IMR-90 (cell line): ENCODE measurements at regions of chr10 and their contacts with region 1.

Region 1: DNA sequence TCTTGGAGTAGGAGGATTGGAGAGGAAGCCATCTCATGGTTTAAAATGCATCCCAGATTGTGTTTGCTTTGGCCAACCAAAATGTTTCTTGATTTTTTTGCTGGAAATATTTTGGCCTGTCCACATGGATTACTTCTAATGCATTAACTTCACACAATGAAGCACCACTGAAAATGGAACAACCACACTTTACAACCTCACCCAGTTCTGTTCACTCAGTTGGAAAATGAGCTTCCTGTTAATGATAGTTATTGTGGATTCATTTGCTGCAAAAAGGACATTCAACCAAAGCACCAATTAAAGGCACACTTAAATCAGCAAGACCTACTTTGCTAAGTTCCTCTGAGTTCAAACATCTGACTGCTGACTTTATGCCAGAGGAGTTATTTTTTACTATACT is 11.3 kb upstream of the A1CF start:
- DNase-seq: no peak
- ATAC-seq: no peak
- H3K4me3 ChIP-seq: no peak overlapping the region
- H3K27ac ChIP-seq: no peak overlapping the region
- H3K4me1 ChIP-seq: no peaks in the 10 kb centered on the region
- H3K27me3 ChIP-seq: peaks cover 6% of the 10 kb centered on the region
- CTCF ChIP-seq: no peak
- POLR2A ChIP-seq: no peak
- RAD21 ChIP-seq: no peak

Region 2: GRCh38 chr10:50788951-50789945 is 107.5 kb before region 1 on chr10:
- CTCF ChIA-PET with region 1: no interaction called
- POLR2A ChIA-PET with region 1: no interaction called
- dilution Hi-C with region 1: no loop called
- in situ Hi-C with region 1: no loop called
- intact Hi-C with region 1: loop called (anchors 1 kb)
- DNase-seq: peak; percentile 42
- ATAC-seq: peak; percentile 94
- H3K4me3 ChIP-seq: no peak overlapping the region
- H3K27ac ChIP-seq: no peak overlapping the region
- H3K4me1 ChIP-seq: no peaks in the 10 kb centered on the region
- H3K27me3 ChIP-seq: peaks cover 2% of the 10 kb centered on the region; the same call in 1 of the 2 replicates
- CTCF ChIP-seq: peak; percentile 52
- POLR2A ChIP-seq: no peak
- RAD21 ChIP-seq: peak; percentile 66

Region 3: GRCh38 chr10:51162002-51162401 is 265.3 kb after region 1 on chr10:
- CTCF ChIA-PET with region 1: no interaction called
- POLR2A ChIA-PET with region 1: no interaction called
- dilution Hi-C with region 1: no loop called
- in situ Hi-C with region 1: no loop called
- intact Hi-C with region 1: no loop called
- DNase-seq: no peak
- ATAC-seq: no peak
- H3K4me3 ChIP-seq: no peak overlapping the region
- H3K27ac ChIP-seq: no peak overlapping the region
- H3K4me1 ChIP-seq: no peaks in the 10 kb centered on the region; the same call in 1 of the 2 replicates
- H3K27me3 ChIP-seq: no peaks in the 10 kb centered on the region
- CTCF ChIP-seq: no peak
- POLR2A ChIP-seq: no peak
- RAD21 ChIP-seq: no peak

Region 4: DNA sequence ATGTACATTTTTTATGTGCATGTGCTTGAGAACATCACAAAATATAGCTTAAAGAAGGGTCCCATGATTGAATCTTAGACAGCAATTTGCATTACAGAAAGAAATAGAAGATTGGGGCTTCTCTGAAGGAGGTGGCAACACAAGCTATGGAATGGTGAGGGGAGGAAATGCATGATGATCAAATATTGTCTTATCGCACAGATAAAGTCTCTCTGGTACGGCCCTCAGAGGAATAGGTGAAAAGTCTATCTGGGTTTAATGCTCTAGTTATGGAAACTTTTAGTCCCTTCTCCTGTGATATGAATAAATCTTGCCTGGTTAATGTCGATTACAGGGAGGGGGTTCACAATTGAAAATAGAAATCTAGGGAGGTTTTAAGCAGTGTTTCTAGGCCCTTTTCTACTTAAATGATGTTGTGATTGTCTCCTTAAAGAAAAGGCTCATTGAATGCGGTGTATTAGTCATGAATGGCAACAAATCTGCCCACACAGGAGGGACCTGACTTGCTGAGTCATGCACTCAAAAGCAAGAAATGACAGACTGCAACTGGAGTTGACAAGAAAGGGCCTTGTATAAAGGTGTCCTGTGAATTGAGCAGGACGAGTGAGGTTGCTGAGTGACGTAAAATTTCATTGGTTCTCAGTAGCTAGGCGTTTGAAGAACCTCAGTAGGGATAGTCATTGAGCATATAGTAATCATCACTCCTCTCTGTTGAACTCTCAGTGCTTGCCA is 936.1 kb after region 1 on chr10:
- CTCF ChIA-PET with region 1: no interaction called
- POLR2A ChIA-PET with region 1: no interaction called
- dilution Hi-C with region 1: no loop called
- in situ Hi-C with region 1: no loop called
- intact Hi-C with region 1: no loop called
- DNase-seq: peak; percentile 93
- ATAC-seq: peak; percentile 90
- H3K4me3 ChIP-seq: no peak overlapping the region
- H3K27ac ChIP-seq: peak overlapping the region; percentile 19; the same call in 1 of the 2 replicates
- H3K4me1 ChIP-seq: peaks cover 2% of the 10 kb centered on the region; the same call in 1 of the 2 replicates
- H3K27me3 ChIP-seq: no peaks in the 10 kb centered on the region
- CTCF ChIP-seq: no peak
- POLR2A ChIP-seq: no peak
- RAD21 ChIP-seq: no peak